HEK293 (cell line): ENCODE measurements at regions of chr1 and their contacts with region 1.

Region 1: DNA sequence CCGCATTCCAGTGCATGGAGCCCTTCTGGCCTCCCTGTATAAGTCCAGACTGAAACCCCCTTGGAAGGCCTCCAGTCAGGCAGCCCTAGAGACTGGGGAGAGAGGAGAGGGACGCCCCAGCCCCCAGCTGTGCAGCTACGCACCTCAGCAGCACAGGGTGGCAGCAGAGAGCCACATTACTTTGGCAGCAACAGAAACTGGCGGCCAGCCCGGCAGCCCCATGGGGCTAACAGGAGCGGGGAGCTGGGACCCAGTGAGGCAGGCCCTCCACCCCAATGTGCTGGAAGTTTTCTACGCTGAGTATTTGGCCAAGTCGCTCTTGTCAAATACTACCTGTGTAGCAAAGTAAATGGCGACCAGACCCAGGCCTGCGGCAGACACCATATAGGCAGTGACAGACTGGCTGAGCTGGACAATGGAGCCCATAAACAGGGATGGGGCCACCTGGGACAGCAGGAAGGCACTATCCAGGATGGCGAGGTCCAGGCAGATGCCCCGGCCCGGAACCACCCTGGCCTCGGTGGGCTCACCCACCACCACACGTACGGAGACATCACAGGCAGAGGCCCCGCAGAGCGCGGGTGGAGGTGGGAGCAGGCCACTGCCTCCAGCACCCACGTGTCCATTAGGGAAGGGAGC is 21.2 kb downstream of the SLC45A3 start:
- H3K4me3 ChIP-seq: no peak overlapping the region
- H3K27ac ChIP-seq: no peak overlapping the region
- H3K4me1 ChIP-seq: no peaks in the 10 kb centered on the region
- CTCF ChIP-seq: peak; percentile 87

Region 2: GRCh38 chr1:205396967-205397616 is 262.0 kb before region 1 on chr1:
- CTCF ChIA-PET with region 1: interaction called, 10 read pairs
- POLR2A ChIA-PET with region 1: no interaction called
- H3K4me3 ChIP-seq: no peak overlapping the region
- H3K27ac ChIP-seq: no peak overlapping the region
- H3K4me1 ChIP-seq: no peaks in the 10 kb centered on the region
- CTCF ChIP-seq: peak; percentile 81

Region 3: DNA sequence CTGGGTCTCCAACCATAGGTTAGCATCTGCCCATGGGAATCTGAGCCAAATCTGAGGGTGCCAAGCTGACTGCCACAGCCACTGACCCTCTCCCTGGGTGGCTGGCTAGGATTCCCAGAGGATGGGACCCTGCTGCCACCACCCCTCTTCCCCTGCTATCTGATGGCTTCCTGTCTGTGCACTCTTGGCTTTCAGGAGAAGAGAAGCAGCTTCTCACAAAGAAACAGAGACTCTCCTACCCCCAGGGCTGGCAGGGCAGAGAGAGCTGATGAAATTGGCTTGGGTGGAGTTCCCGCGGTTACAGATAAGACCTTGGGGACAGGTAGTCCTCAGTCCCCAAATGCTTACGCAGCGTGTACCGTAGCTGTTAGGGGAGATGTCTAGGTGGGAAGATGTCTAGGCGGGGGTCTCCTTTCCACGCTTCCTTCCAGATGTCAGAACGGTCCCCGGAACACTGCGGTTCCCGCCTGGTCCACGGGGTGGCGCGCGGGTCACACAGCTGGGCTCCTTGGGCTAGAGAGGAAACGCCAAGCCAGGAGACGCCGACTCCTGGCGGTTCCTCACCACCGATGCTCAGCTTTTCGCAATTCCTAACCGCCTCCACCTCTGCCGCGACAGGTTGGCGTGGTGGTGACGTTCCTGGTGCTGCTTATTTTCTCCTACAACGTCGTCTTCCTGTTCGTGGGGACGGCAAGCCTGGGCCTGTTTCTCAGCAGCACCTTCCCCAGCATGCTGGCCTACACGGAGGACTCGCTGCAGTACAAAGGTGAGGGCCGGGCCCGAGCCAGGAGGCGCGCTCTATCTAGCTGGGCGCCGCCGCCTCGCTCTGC is 67.3 kb before region 1 on chr1:
- CTCF ChIA-PET with region 1: interaction called, 414 read pairs
- POLR2A ChIA-PET with region 1: interaction called, 3 read pairs
- H3K4me3 ChIP-seq: peak overlapping the region; percentile 12
- H3K27ac ChIP-seq: no peak overlapping the region
- H3K4me1 ChIP-seq: no peaks in the 10 kb centered on the region; the same call in 1 of the 2 replicates
- CTCF ChIP-seq: peak; percentile 98

Region 4: DNA sequence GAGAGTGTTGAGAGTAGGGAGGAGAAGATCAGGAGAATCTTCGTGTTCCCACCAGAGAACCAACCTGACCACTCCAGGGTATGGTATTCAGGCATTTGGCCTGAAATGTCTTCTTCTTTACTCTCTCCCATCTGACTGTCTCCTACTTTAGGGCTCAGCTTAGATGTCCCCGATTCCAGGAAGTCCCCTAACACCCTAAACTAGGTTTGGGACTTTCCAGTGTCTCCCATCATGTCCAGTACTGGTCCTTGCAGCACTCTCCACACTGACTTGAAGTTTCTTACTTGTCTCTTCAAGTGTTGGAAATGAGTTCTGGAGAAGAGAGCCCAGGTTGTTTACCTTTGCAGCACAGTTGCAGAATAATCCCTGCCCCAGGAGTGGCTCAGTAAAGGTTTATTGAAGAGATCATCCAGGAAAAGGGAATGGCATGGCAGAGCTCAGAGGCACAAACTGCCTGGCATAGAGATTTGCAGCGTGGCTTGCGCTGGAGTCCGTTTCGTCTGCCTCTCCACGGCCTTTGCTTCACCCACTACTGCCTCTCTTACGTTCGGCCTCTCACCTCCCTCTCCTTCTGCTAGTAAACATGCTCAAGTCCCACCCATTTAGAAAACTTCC is 21.1 kb before region 1 on chr1:
- CTCF ChIA-PET with region 1: interaction called, 54 read pairs
- POLR2A ChIA-PET with region 1: interaction called, 6 read pairs
- H3K4me3 ChIP-seq: no peak overlapping the region
- H3K27ac ChIP-seq: no peak overlapping the region
- H3K4me1 ChIP-seq: no peaks in the 10 kb centered on the region
- CTCF ChIP-seq: no peak

Region 5: DNA sequence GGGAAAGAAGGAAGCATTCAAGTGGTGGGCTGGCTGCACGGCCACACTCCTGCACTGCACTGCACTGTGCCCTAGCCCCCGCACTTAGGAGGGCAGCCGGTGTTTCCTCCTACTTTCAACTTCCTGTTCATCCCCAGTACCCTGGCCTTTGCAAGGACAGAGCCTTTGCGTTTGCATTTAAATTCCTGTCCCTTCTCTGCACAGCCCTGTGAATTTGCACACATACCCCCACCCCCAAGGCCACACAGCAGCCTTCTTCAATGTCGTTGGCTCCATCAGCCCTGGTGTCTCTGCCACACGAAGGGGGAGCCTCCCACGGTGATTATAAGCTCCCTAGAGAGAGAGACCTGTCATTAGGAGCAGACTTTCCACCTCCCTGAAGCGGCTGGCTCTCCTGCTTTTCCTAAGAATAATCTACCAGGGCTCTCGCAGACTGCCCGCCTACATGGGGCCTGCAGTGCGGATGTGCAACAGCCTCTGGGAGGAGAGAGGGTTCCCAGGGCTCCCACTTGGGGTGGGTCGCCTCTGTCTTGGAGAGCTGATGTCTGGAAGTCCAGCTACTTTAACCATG is 34.4 kb after region 1 on chr1:
- CTCF ChIA-PET with region 1: interaction called, 14 read pairs
- POLR2A ChIA-PET with region 1: no interaction called
- H3K4me3 ChIP-seq: no peak overlapping the region
- H3K27ac ChIP-seq: no peak overlapping the region
- H3K4me1 ChIP-seq: no peaks in the 10 kb centered on the region
- CTCF ChIP-seq: no peak

Region 6: DNA sequence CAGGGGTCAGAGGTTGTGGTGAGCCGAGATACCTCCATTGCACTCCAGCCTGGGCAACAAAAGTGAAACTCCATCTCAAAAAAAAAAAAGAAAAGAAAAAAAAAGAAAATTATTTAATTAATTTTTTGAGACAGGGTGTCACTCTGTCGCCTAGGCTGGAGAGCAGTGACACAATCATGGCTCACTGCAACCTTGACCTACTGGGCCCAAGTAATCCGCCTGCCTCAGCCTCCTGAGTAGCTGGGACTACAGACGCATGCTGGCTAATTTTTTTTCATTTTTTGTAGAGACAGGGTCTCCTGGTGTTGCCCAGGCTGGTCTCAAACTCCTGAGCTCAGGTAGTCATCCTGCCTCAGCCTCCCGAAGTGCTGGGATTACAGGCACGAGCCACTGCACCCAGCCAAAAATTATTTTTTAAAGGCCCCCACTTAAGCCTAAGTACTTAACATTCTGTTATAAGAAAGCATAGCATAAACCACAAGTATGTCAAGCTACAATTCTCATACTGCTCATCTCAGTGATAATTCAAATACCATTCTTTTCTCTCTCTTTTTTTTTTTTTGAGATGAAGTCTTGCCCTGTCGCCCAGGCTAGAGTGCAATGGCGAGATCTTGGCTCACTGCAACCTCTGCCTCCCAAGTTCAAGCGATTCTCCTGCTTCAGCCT is 71.0 kb after region 1 on chr1:
- CTCF ChIA-PET with region 1: interaction called, 10 read pairs
- POLR2A ChIA-PET with region 1: no interaction called
- H3K4me3 ChIP-seq: no peak overlapping the region
- H3K27ac ChIP-seq: no peak overlapping the region
- H3K4me1 ChIP-seq: no peaks in the 10 kb centered on the region
- CTCF ChIP-seq: no peak